ENCODE measurements at regions of chr22 and their contacts with region 1.

Region 1: GRCh38 chr22:25334162-25334490 is 114.7 kb downstream of the CRYBB2 start:
- DNase-seq: peak; percentile 10
- ATAC-seq: peak; percentile 84
- H3K4me3 ChIP-seq: no peak overlapping the region
- H3K27ac ChIP-seq: no peak overlapping the region
- H3K4me1 ChIP-seq: no peaks in the 10 kb centered on the region
- H3K27me3 ChIP-seq: no peaks in the 10 kb centered on the region
- CTCF ChIP-seq: peak; percentile 76

Region 2: DNA sequence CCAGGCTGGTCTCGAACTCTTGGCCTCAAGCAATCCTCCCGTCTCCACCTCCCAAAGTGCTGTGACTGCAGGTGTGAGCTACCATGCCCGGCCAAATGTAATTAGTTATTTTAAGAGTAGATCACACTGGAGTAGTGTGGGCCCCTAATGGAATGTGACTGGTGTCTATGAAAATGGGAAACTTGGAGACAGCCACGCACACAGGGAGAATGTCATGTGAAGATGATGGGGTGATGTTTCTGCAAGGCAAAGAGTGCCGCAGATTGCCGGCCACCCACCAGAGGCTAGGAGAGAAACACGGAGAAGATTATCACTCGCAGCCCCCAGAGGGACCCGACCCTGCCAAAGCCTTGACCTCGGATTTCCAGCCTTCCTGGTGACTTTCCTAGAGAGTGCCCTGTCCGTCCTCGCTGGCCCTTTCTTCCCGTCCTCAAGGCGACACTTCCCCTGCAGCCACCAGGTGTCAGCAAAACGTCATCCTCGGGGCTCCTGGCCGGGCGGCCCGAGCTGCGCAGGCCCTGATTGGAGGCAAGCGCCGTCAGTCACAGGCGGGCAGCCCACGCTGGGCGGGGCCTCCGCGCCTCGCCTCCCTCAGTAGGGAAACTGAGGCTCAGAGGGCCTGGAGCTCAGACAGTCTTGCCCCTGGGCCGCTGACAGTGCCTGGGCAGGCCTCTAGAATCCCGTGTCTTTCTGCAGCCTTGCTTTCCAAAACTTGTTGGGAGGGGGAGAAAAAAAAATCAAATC is 98.4 kb before region 1 on chr22:
- CTCF ChIA-PET with region 1: no interaction called
- POLR2A ChIA-PET with region 1: no interaction called
- in situ Hi-C with region 1: no loop called
- intact Hi-C with region 1: loop called (anchors 5 kb)
- DNase-seq: peak; percentile 32
- ATAC-seq: peak; percentile 99
- H3K4me3 ChIP-seq: peak overlapping the region in 1 of 2 experiments; percentile 29; a peak in 1 of 4 replicates
- H3K27ac ChIP-seq: no peak overlapping the region
- H3K4me1 ChIP-seq: no peaks in the 10 kb centered on the region
- H3K27me3 ChIP-seq: no peaks in the 10 kb centered on the region
- CTCF ChIP-seq: peak; percentile 86

Region 3: GRCh38 chr22:25282671-25283561 is 51.2 kb before region 1 on chr22:
- CTCF ChIA-PET with region 1: no interaction called
- POLR2A ChIA-PET with region 1: no interaction called
- in situ Hi-C with region 1: no loop called
- intact Hi-C with region 1: no loop called
- DNase-seq: no peak
- ATAC-seq: peak; percentile 48; the same call in 1 of the 2 replicates
- H3K4me3 ChIP-seq: peak overlapping the region in 1 of 2 experiments; percentile 5; a peak in 1 of 4 replicates
- H3K27ac ChIP-seq: no peak overlapping the region
- H3K4me1 ChIP-seq: no peaks in the 10 kb centered on the region
- H3K27me3 ChIP-seq: peaks cover 2% of the 10 kb centered on the region; the same call in 1 of the 2 replicates
- CTCF ChIP-seq: peak; percentile 12; the same call in 1 of the 2 replicates

Region 4: DNA sequence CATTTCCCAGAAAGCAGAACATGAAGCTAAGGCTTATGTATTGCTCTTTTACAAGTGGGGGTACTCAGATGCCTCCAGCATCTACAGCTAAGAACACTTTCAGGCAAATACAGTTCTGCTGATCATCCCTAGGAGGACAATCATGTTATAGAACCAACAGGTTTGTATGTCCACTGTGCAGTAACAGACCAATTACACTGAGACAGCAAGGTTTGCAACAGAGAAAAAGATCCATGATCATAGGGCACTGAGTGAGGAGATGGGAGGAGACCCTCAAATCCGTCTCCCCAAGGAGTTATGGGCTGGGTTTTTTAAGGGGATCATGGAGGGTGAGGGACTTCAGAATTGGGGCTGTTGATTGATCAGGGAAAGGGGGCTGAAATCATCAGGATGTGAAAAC is 191.2 kb after region 1 on chr22:
- CTCF ChIA-PET with region 1: no interaction called
- POLR2A ChIA-PET with region 1: no interaction called
- in situ Hi-C with region 1: no loop called
- intact Hi-C with region 1: no loop called
- DNase-seq: no peak
- ATAC-seq: no peak
- H3K4me3 ChIP-seq: no peak overlapping the region
- H3K27ac ChIP-seq: no peak overlapping the region
- H3K4me1 ChIP-seq: no peaks in the 10 kb centered on the region
- H3K27me3 ChIP-seq: no peaks in the 10 kb centered on the region
- CTCF ChIP-seq: no peak

Measured in Panc1 (cell line).